ENCODE measurements at regions of chr16 and their contacts with region 1.

Region 1: DNA sequence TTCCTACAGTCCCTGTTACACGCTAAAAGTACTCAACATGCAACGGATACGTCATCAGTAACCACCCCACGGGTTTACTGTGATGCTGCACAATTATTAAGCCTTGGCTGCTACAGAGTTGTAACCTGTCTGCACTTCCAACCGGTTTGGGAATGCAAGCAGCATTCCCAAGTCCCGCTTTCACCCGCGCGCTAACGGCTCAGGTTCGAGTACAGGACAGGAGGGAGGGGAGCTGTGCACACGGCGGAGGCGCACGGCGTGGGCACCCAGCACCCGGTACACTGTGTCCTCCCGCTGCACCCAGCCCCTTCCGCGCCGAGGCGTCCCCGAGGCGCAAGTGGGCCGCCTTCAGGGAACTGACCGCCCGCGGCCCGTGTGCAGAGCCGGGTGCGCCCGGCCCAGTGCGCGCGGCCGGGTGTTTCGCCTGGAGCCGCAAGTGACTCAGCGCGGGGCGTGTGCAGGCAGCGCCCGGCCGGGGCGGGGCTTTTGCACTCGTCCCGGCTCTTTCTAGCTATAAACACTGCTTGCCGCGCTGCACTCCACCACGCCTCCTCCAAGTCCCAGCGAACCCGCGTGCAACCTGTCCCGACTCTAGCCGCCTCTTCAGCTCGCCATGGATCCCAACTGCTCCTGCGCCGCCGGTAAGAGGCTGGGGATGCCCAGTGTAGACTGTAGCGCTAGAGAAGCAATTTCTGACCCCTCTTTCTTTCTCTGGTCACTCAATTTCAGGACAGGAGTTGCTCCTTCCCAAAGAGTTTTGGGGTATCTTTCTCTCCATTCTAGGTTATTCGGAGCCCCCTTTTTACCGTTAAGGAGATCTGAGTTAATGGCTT is at the start of gene MT2A:
- DNase-seq: peak; percentile 94
- H3K4me3 Mint-ChIP-seq: peak within 1 kb of the TSS; percentile 88
- H3K27ac Mint-ChIP-seq: peak within 1 kb of the TSS; percentile 88
- H3K4me1 Mint-ChIP-seq: peaks cover 62% of the 10 kb centered on the region
- H3K27me3 Mint-ChIP-seq: no peaks in the 10 kb centered on the region
- total RNA-seq, gene MT2A: 95.7 to 130 TPM

Region 2: DNA sequence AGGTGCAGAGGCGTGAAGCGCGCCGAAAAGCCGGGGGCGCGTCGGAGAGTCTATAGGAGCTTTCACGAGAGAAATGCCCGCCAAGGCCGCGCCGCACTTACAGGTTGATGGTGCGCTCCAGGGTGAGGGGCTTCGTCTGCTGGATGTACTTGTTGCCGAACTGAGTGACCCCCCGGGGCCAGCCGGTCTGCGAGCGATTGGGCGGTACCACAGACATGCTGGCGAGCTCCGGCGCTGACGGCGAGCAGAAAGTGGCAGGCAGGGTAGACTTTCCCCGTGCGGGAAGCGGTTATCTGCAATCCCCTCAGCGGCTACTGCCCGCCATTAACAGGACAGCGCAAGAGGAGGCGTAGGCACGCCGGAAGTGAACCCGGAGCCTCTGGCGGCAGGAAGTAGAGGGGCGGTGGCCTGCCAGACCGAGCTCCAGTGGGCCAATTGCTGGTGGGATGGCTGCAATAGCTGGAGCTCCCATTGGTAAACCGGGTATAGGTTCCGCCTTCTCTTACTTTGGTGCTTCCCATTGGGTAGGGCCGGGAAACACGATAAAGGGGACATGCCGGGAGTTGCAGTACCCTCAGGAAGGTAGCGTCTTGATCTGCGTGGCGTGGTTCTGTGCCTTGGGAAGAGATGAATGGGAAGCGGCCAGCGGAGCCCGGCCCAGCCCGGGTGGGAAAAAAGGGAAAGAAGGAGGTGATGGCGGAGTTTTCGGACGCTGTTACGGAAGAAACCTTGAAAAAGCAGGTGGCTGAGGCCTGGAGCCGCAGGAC is 157.1 kb before region 1 on chr16 and contains the starts of genes NUDT21 and OGFOD1:
- CTCF ChIA-PET with region 1: no interaction called
- intact Hi-C with region 1: loop called (anchors 2 kb)
- DNase-seq: peak; percentile 96
- H3K4me3 Mint-ChIP-seq: peak within 1 kb of the TSS; percentile 93
- H3K27ac Mint-ChIP-seq: peak within 1 kb of the TSS; percentile 90
- H3K4me1 Mint-ChIP-seq: peaks cover 48% of the 10 kb centered on the region
- H3K27me3 Mint-ChIP-seq: no peaks in the 10 kb centered on the region
- total RNA-seq, gene NUDT21: 324 to 330 TPM
- total RNA-seq, gene OGFOD1: 48.5 to 50.6 TPM

Region 3: GRCh38 chr16:56657555-56658326 is 49.5 kb after region 1 on chr16 and contains the start of gene MT1F:
- CTCF ChIA-PET with region 1: no interaction called
- intact Hi-C with region 1: loop called (anchors 1 kb)
- DNase-seq: peak; percentile 83
- H3K4me3 Mint-ChIP-seq: peak within 1 kb of the TSS; percentile 91
- H3K27ac Mint-ChIP-seq: peak within 1 kb of the TSS; percentile 41
- H3K4me1 Mint-ChIP-seq: peaks cover 18% of the 10 kb centered on the region
- H3K27me3 Mint-ChIP-seq: no peaks in the 10 kb centered on the region
- total RNA-seq, gene MT1F: 5.4 to 6.4 TPM

Region 4: GRCh38 chr16:56669005-56669839 is 61.0 kb after region 1 on chr16 and contains the start of gene MT1H:
- CTCF ChIA-PET with region 1: no interaction called
- intact Hi-C with region 1: no loop called
- DNase-seq: peak; percentile 37
- H3K4me3 Mint-ChIP-seq: no peak within 1 kb of the TSS
- H3K27ac Mint-ChIP-seq: no peak within 1 kb of the TSS
- H3K4me1 Mint-ChIP-seq: peaks cover 19% of the 10 kb centered on the region
- H3K27me3 Mint-ChIP-seq: peaks cover 44% of the 10 kb centered on the region
- total RNA-seq, gene MT1H: 5.4 to 7.4 TPM

Region 5: DNA sequence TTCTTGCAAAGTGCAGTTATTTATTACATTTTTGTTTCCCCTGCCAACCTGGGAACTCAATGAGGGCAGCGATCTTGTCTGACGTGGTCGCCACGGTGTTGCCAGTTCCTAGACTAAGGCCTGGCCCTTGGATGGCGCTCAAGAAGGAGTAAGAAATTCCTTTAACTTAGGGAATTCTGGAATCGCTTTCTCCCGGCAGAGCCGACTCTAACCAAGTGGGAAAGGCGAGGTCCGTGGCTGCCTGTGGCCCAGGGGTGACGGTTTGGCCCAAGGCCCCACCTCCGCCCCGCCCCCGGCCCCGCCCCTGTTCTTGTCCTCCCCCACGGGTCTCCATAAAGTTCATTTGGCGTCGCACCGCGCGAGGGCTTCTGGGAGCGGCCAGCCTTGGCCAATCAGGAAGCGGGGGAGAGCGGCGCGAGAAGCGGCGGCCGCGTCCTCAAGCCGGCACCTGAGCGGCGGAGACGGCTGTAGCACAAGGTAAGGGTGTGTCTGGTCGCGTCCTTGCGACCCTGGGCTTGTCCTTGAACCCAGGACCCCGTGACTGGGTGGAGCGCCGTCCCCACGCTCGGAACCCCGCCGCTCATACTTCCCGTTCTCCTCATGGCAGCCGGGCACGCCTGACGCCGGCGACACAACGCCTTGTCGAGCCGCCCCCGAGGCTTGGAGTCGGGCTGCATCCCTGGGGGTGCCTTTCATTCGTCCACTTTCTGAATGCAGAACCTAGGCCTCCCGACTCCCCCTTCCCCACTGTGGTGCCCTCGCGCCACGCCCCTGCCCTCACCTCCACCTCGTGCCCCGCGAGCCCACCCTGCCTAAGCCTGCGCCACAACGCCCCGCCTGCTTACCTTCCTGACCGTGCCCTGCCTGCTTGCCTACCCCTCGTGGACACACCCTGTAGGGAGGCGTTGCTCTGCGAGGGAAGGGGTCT is 121.7 kb after region 1 on chr16 and contains the start of gene NUP93:
- CTCF ChIA-PET with region 1: no interaction called
- intact Hi-C with region 1: loop called (anchors 1 kb)
- DNase-seq: peak; percentile 94
- H3K4me3 Mint-ChIP-seq: no peak within 1 kb of the TSS
- H3K27ac Mint-ChIP-seq: peak within 1 kb of the TSS; percentile 78
- H3K4me1 Mint-ChIP-seq: peaks cover 14% of the 10 kb centered on the region
- H3K27me3 Mint-ChIP-seq: no peaks in the 10 kb centered on the region
- total RNA-seq, gene NUP93: 161 to 172 TPM

Region 6: GRCh38 chr16:56988948-56989945 is 381.0 kb after region 1 on chr16 and contains the start of gene NLRC5:
- CTCF ChIA-PET with region 1: no interaction called
- intact Hi-C with region 1: loop called (anchors 5 kb)
- DNase-seq: peak; percentile 95
- H3K4me3 Mint-ChIP-seq: peak within 1 kb of the TSS; percentile 99
- H3K27ac Mint-ChIP-seq: peak within 1 kb of the TSS; percentile 100
- H3K4me1 Mint-ChIP-seq: peaks cover 73% of the 10 kb centered on the region
- H3K27me3 Mint-ChIP-seq: no peaks in the 10 kb centered on the region
- total RNA-seq, gene NLRC5: 104 to 119 TPM

Region 7: DNA sequence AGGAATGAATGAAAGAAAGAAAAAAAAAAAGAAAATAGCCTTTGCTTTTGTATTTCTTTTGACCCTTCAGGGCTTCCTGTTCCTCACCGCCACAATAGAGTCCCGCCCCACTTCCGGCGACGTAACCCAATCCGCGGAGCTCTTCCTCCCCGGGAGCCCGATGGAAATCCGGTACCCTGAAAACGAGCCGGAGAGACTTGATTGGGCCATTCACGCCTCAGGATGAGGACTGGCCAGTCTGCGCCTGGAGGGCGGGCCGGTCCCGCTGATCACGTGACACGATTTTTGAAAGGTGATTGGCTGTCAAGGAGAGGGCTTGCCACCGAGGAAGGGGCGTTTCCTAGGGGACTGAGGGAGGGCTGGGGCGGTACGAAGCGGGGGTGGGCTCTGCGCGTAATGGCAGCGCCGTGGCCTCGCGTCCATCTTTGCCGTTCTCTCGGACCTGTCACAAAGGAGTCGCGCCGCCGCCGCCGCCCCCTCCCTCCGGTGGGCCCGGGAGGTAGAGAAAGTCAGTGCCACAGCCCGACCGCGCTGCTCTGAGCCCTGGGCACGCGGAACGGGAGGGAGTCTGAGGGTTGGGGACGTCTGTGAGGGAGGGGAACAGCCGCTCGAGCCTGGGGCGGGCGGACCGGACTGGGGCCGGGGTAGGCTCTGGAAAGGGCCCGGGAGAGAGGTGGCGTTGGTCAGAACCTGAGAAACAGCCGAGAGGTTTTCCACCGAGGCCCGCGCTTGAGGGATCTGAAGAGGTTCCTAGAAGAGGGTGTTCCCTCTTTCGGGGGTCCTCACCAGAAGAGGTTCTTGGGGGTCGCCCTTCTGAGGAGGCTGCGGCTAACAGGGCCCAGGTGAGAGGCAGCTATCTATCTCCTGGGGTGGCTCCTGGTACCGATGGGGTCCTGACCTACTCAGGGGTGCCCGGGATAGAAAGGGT is 577.9 kb after region 1 on chr16 and contains the starts of genes PSME3IP1 and RSPRY1:
- CTCF ChIA-PET with region 1: interaction called, 3 read pairs
- intact Hi-C with region 1: loop called (anchors 1 kb)
- DNase-seq: peak; percentile 100
- H3K4me3 Mint-ChIP-seq: peak within 1 kb of the TSS; percentile 97
- H3K27ac Mint-ChIP-seq: peak within 1 kb of the TSS; percentile 95
- H3K4me1 Mint-ChIP-seq: peaks cover 52% of the 10 kb centered on the region
- H3K27me3 Mint-ChIP-seq: no peaks in the 10 kb centered on the region
- total RNA-seq, gene PSME3IP1: 106 to 110 TPM
- total RNA-seq, gene RSPRY1: 25.7 to 28.7 TPM